A549 (cell line): ENCODE measurements at regions of chr4 and their contacts with region 1.

Region 1: GRCh38 chr4:169659716-169660670 is 39.6 kb downstream of the CLCN3 start:
- DNase-seq: peak; percentile 72 to 96
- ATAC-seq: peak; percentile 99 to 100
- H3K4me3 ChIP-seq: peak overlapping the region; percentile 53
- H3K27ac ChIP-seq: peak overlapping the region; percentile 78 to 89
- H3K4me1 ChIP-seq: peaks cover 37% of the 10 kb centered on the region; the same call in 2 of the 3 replicates
- CTCF ChIP-seq: no peak
- EP300 ChIP-seq: no peak
- POLR2A ChIP-seq: no peak
- RAD21 ChIP-seq: no peak

Region 2: DNA sequence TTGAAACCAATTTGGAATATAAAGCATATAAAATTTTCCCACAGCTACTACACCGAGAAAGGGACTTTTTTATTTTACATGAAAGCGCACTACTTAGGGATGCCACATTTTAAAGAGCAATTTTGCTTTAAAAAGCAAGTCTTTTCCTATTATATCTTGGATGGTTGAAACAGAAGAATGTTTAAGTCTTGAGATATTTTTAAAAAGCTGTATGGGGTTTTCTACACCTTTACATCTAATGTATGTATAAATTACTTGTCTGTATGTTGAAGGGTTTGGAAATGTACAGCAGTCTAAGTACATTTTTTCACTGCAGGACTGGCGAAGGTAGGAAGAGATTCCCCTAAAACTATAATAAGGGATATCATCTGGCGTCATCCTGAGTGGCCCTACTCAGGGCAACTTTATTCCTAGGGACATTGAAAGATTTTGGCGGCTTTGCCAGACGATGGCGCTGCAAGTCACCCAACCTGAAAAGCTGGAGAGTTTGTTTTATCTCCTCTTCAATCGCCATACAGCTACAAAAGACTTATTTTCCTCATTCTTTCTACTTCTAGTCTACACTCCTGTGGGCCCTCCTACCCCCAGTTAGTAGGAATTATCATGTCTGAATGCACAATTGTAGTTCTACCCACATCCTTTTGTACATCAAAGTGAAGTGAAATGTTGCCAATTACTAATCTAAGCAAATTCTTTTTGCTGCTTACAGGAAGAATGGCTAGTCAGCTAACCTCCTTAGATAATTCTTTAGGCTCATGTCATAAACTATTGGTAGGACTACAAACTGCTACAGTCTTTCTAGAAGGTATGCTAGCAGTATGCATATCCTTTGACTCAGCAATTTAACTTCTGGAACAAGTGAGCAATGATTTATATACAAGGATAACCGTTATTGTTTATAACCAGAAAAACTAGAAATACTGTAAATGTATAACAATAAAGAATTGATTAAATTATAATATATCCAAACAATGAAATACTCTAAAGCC is 46.8 kb before region 1 on chr4:
- CTCF ChIA-PET with region 1: interaction called, 17 read pairs
- POLR2A ChIA-PET with region 1: interaction called, 9 read pairs
- DNase-seq: peak; percentile 44 to 77
- ATAC-seq: peak; percentile 69 to 83
- H3K4me3 ChIP-seq: peak overlapping the region; percentile 78
- H3K27ac ChIP-seq: peak overlapping the region; percentile 65 to 97
- H3K4me1 ChIP-seq: peaks cover 12% of the 10 kb centered on the region; the same call in 1 of the 3 replicates
- CTCF ChIP-seq: peak; percentile 76
- EP300 ChIP-seq: no peak
- POLR2A ChIP-seq: no peak
- RAD21 ChIP-seq: peak; percentile 64 to 73

Region 3: GRCh38 chr4:169619959-169620879 is 39.8 kb before region 1 on chr4 and contains the start of gene CLCN3:
- CTCF ChIA-PET with region 1: no interaction called
- POLR2A ChIA-PET with region 1: interaction called, 10 read pairs
- DNase-seq: peak; percentile 74 to 96
- ATAC-seq: peak; percentile 97 to 99
- H3K4me3 ChIP-seq: peak within 1 kb of the TSS; percentile 67
- H3K27ac ChIP-seq: peak within 1 kb of the TSS; percentile 86 to 90
- H3K4me1 ChIP-seq: peaks cover 11% of the 10 kb centered on the region; the same call in 1 of the 3 replicates
- CTCF ChIP-seq: no peak
- EP300 ChIP-seq: no peak
- POLR2A ChIP-seq: peak; percentile 89
- RAD21 ChIP-seq: no peak
- polyA plus RNA-seq, gene CLCN3: 41.1 and 53.6 TPM in 2 replicates